GM10248 (cell line): ENCODE measurements at regions of chr17 and their contacts with region 1.

Region 1: DNA sequence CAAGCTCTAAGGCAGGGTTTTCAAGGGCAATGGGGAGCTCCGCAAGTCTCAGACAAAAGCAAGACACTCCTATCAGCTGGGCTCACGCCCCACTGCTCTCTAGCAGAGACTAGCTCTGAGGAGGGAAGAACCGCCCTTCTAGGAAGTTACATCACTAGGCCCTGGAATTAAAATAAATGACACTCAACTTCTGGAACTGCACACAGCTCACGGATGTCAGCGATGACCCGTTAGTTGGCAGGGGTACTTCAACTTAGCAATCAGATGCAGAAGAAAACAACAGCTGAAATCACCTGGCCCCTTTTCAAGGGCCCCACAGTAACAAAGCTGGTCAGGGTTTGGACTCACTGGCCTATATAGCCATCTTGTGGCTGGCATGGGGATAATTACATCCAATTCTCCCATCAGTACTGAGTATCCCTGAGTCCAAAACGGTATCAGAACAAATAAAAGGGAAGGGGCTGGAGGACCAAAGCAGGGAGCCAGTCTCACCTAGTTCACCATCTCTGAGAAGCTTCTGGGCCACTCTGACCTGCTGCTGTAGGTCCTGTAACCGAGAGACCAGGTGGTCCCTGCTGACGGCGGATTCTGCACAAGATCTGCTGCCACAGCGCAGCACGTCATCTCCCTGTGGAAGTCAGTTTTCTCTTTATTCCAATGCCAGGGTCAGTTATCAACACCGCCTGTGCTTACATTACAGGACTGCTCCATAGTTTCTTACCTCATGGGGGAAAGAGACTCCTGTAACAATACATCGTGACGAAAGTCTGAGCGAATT is 22.2 kb downstream of the SERPINF1 start:
- DNase-seq: peak; percentile 53
- CTCF ChIP-seq: peak; percentile 35

Region 2: GRCh38 chr17:1762901-1763898 is 20.8 kb before region 1 on chr17:
- CTCF ChIA-PET with region 1: no interaction called
- POLR2A ChIA-PET with region 1: no interaction called
- DNase-seq: no peak
- CTCF ChIP-seq: no peak

Region 3: DNA sequence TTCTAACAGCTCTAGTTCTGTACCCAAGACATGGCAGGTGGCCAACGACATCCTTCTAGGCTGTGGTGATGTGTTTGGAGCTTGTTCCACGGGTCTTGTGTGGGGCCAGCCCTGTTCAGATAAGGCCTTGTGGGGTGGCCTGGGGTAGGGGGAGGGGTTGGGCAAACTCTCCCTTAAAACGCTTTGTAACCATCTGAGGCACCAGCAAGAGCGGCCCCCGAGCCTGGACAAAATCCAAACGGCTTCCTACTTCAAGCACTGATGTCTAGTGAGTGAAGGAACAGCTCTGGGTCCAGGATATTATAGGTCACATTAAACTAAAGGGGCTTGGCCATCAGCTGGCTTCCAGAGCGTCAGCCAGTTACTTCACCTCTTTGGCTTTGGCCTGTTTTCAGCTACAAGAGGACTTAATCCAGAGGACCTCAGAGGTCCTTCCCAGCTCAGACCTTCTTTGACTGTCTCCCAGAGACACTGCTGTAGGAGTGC is 10.3 kb before region 1 on chr17:
- CTCF ChIA-PET with region 1: interaction called, 10 read pairs
- POLR2A ChIA-PET with region 1: interaction called, 3 read pairs
- DNase-seq: no peak
- CTCF ChIP-seq: no peak